ENCODE measurements at regions of chr1 and their contacts with region 1.

Region 1: DNA sequence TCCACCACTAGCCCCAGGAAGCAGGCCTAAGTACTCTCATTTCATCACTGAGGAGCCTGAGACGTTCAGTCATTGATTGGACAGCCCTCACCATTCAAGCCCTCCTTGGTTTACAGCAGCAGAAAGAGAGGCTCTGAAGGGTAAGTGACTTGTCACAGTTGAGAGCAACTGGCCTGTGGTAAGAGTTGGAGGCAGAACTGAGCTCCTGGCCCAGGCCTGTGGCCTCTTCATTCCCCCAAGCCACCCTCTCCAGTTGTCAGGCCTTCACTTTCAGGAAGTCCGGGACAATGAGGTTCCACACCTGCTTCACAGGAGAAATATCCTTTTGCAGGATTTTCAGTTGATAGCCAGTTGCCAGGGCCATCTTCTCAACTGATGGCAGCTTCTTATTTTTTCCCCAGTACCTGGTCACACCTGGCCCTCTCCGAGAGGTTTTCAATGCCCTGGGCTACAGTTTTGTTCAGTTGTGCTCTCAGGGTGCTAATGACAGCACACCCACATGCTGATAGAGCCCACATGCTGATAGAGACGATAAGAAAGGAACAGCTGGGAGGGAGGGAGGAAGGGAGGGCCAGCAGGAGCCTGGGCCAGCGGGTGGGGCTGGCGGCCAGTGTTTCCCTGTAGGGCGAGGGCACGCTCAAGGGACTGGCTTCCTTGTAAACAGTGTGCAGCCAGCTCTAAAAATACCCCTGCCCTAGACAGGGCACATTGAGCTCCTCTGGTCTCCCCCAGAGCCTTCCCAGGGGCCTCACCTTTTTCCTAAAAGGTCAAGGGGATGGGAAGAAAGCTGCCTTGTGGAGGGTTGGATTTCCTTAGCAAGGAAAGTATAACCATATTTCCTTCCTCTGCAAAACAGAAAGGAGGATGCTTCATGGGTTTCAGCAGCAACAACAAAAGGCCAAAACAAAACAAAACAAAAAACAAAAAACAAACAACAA is 112.7 kb upstream of the JUN start:
- DNase-seq: peak; percentile 79
- H3K4me3 ChIP-seq: no peak overlapping the region
- H3K27ac ChIP-seq: peak overlapping the region; percentile 61
- H3K4me1 ChIP-seq: peaks cover 75% of the 10 kb centered on the region
- H3K27me3 ChIP-seq: no peaks in the 10 kb centered on the region
- CTCF ChIP-seq: peak in 1 of 2 donors; percentile 17
- POLR2A ChIP-seq: no peak

Region 2: GRCh38 chr1:58515794-58516401 is 380.6 kb before region 1 on chr1:
- CTCF ChIA-PET with region 1: no interaction called
- POLR2A ChIA-PET with region 1: no interaction called
- dilution Hi-C with region 1: no loop called
- intact Hi-C with region 1: loop called (anchors 10 kb)
- DNase-seq: peak; percentile 71
- H3K4me3 ChIP-seq: no peak overlapping the region
- H3K27ac ChIP-seq: no peak overlapping the region
- H3K4me1 ChIP-seq: no peaks in the 10 kb centered on the region
- H3K27me3 ChIP-seq: no peaks in the 10 kb centered on the region
- CTCF ChIP-seq: peak; percentile 37 to 58
- POLR2A ChIP-seq: no peak

Region 3: DNA sequence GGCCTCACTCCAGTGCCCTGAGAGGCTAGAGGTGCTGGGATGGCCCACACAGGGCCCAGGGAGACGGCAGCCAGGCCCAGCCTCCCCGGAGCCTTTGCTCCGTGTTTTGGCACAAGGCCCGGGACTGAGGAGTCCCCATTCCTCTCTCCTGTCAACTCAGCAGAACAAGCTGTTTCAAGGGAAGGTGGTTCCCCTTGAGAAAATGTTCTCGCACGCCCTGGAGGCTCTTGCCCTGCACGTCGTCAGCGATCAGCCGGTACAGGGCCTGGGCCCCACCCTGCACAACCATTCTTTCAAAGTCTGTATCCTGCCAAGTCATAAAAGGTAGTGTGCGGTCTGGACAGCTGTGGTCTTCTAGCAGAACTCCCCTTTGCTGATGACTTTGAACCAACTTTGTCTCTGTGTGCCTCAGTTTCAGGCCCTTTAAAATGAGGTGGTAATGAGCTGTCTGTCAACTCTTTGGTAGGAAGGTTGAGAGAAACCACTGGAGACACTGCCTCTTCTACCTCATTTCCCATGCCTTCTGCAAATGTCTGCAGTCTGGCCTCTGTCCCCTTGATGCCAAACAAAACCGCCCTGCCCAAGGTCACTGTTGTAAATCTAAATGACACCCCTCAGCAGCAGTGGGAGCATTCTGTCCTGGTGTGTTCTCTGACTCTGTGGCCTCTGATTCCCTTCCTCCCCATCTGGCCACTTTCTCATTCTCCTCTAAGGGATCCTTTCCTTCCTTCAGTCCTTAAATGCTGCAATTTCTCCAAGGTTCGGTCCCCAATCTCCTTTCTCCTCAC is 26.0 kb after region 1 on chr1:
- CTCF ChIA-PET with region 1: no interaction called
- POLR2A ChIA-PET with region 1: no interaction called
- dilution Hi-C with region 1: no loop called
- intact Hi-C with region 1: no loop called
- DNase-seq: no peak
- H3K4me3 ChIP-seq: no peak overlapping the region
- H3K27ac ChIP-seq: no peak overlapping the region
- H3K4me1 ChIP-seq: no peaks in the 10 kb centered on the region
- H3K27me3 ChIP-seq: no peaks in the 10 kb centered on the region
- CTCF ChIP-seq: no peak
- POLR2A ChIP-seq: no peak

Region 4: GRCh38 chr1:59025898-59026426 is 129.4 kb after region 1 on chr1:
- CTCF ChIA-PET with region 1: no interaction called
- POLR2A ChIA-PET with region 1: no interaction called
- dilution Hi-C with region 1: no loop called
- intact Hi-C with region 1: loop called (anchors 5 kb)
- DNase-seq: no peak
- H3K4me3 ChIP-seq: no peak overlapping the region
- H3K27ac ChIP-seq: no peak overlapping the region
- H3K4me1 ChIP-seq: peaks cover 34% of the 10 kb centered on the region
- H3K27me3 ChIP-seq: no peaks in the 10 kb centered on the region
- CTCF ChIP-seq: no peak
- POLR2A ChIP-seq: no peak

Region 5: DNA sequence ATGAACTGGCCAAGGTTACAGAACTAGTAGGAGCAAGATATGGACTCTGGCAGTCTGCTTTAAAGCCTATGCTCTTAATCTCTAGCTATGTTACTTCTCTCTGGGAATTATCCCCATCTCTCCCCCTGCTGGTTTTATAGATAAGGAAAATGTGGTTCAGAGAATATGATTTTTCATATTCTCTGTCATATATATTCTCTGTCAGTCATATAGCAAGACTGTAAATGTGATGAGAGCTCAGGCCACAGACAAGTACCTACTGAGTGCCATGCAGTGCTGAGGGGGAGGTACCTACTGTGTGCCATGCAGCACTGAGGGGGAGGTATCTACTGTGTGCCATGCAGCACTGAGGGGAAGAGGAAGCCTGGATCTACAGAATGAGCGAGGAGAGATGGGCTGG is 180.1 kb after region 1 on chr1:
- CTCF ChIA-PET with region 1: interaction called, 10 read pairs
- POLR2A ChIA-PET with region 1: no interaction called
- dilution Hi-C with region 1: no loop called
- intact Hi-C with region 1: loop called (anchors 1 kb)
- DNase-seq: peak; percentile 60
- H3K4me3 ChIP-seq: no peak overlapping the region
- H3K27ac ChIP-seq: no peak overlapping the region
- H3K4me1 ChIP-seq: peaks cover 13% of the 10 kb centered on the region
- H3K27me3 ChIP-seq: no peaks in the 10 kb centered on the region
- CTCF ChIP-seq: peak in 1 of 2 donors; percentile 16
- POLR2A ChIP-seq: no peak

Region 6: GRCh38 chr1:59128784-59129227 is 232.3 kb after region 1 on chr1:
- CTCF ChIA-PET with region 1: no interaction called
- POLR2A ChIA-PET with region 1: no interaction called
- dilution Hi-C with region 1: no loop called
- intact Hi-C with region 1: loop called (anchors 5 kb)
- DNase-seq: peak; percentile 77
- H3K4me3 ChIP-seq: no peak overlapping the region
- H3K27ac ChIP-seq: peak overlapping the region; percentile 87
- H3K4me1 ChIP-seq: peaks cover 32% of the 10 kb centered on the region
- H3K27me3 ChIP-seq: no peaks in the 10 kb centered on the region
- CTCF ChIP-seq: no peak
- POLR2A ChIP-seq: peak; percentile 33